ENCODE measurements at regions of chr10 and their contacts with region 1.

Region 1: GRCh38 chr10:61943674-61944410 is 42.3 kb downstream of the ARID5B start:
- DNase-seq: peak; percentile 99
- ATAC-seq: peak; percentile 14
- H3K4me3 ChIP-seq: peak overlapping the region; percentile 31
- H3K27ac ChIP-seq: peak overlapping the region; percentile 72
- H3K4me1 ChIP-seq: peaks cover 65% of the 10 kb centered on the region
- H3K27me3 ChIP-seq: no peaks in the 10 kb centered on the region
- CTCF ChIP-seq: peak; percentile 73

Region 2: GRCh38 chr10:60816628-60817397 is 1127.0 kb before region 1 on chr10:
- CTCF ChIA-PET with region 1: interaction called, 16 read pairs
- POLR2A ChIA-PET with region 1: no interaction called
- intact Hi-C with region 1: no loop called
- DNase-seq: peak; percentile 97
- ATAC-seq: peak; percentile 93
- H3K4me3 ChIP-seq: no peak overlapping the region
- H3K27ac ChIP-seq: no peak overlapping the region
- H3K4me1 ChIP-seq: peaks cover 6% of the 10 kb centered on the region; the same call in 1 of the 2 replicates
- H3K27me3 ChIP-seq: no peaks in the 10 kb centered on the region
- CTCF ChIP-seq: peak; percentile 100

Region 3: DNA sequence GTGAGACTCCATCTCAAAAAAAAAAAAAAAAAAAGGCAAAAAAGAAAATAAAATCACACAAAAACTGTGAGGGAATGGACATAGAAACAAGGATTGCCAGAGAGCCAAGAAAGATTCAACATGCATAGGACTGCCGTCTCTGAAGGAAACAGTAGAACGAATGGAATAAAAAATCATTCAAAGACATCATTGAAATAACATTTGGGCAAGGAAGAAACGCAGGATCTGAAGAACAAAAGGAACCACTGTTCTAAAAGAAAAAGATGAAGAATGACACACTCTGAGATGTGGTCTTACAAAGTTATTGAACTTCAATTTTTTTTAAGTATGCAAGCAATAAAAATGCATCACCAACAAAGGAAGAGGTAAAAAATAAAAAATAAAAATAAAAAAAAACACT is 223.9 kb before region 1 on chr10:
- CTCF ChIA-PET with region 1: no interaction called
- POLR2A ChIA-PET with region 1: no interaction called
- intact Hi-C with region 1: no loop called
- DNase-seq: no peak
- ATAC-seq: no peak
- H3K4me3 ChIP-seq: no peak overlapping the region
- H3K27ac ChIP-seq: no peak overlapping the region
- H3K4me1 ChIP-seq: no peaks in the 10 kb centered on the region
- H3K27me3 ChIP-seq: no peaks in the 10 kb centered on the region
- CTCF ChIP-seq: no peak

Region 4: DNA sequence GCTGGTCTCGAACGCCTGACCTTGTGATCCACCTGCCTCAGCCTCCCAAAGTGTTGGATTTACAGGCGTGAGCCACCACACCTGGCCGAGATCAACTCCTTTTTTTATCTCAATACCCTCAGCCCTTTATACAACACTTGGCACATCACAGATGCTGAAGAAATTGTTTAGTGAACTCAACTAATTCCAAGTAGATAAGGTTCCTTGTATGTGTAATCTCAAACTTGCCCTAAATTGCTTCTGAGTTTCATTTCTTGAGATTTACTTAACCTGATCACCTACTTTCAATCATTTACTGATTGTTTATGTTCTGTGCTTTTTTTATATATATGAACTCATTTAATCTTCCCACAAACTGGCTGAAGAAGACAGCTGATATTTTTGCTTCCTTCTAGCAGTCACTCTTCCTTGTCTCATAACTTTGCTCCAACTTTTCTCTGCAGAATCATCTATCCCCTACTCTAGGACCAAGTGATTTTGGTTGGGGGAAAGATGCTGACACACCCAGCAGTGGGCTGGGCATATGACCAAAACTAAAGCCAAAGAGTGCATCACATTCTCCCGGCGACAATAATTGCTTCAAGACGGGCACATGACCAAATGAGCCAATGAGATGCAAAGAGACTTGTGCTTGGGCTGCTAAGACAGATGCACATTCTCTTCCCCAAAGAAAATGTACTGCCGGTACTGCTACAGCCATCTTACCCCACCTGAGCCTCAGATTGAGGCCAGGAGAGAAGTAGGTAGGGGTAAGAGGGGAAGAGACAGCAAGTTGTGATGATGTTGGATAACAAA is 82.7 kb before region 1 on chr10:
- CTCF ChIA-PET with region 1: no interaction called
- POLR2A ChIA-PET with region 1: no interaction called
- intact Hi-C with region 1: no loop called
- DNase-seq: no peak
- ATAC-seq: no peak
- H3K4me3 ChIP-seq: no peak overlapping the region
- H3K27ac ChIP-seq: no peak overlapping the region
- H3K4me1 ChIP-seq: 0 out of 2 replicates have a peak, but pooled peaks cover 6% of the 10 kb centered on the region
- H3K27me3 ChIP-seq: no peaks in the 10 kb centered on the region
- CTCF ChIP-seq: no peak

Region 5: GRCh38 chr10:61918140-61918539 is 25.7 kb before region 1 on chr10:
- CTCF ChIA-PET with region 1: no interaction called
- POLR2A ChIA-PET with region 1: interaction called, 13 read pairs
- intact Hi-C with region 1: no loop called
- DNase-seq: no peak
- ATAC-seq: peak; percentile 39
- H3K4me3 ChIP-seq: no peak overlapping the region
- H3K27ac ChIP-seq: no peak overlapping the region
- H3K4me1 ChIP-seq: peaks cover 3% of the 10 kb centered on the region
- H3K27me3 ChIP-seq: no peaks in the 10 kb centered on the region
- CTCF ChIP-seq: no peak

Region 6: GRCh38 chr10:61974601-61975390 is 31.0 kb after region 1 on chr10:
- CTCF ChIA-PET with region 1: no interaction called
- POLR2A ChIA-PET with region 1: interaction called, 5 read pairs
- intact Hi-C with region 1: loop called (anchors 2 kb)
- DNase-seq: peak; percentile 68
- ATAC-seq: peak; percentile 27
- H3K4me3 ChIP-seq: no peak overlapping the region
- H3K27ac ChIP-seq: 0 out of 2 replicates have a peak overlapping the region, but pooled peaks have one; percentile 1
- H3K4me1 ChIP-seq: peaks cover 26% of the 10 kb centered on the region
- H3K27me3 ChIP-seq: no peaks in the 10 kb centered on the region
- CTCF ChIP-seq: no peak

Region 7: GRCh38 chr10:62019685-62020315 is 76.0 kb after region 1 on chr10:
- CTCF ChIA-PET with region 1: no interaction called
- POLR2A ChIA-PET with region 1: interaction called, 12 read pairs
- intact Hi-C with region 1: no loop called
- DNase-seq: no peak
- ATAC-seq: no peak
- H3K4me3 ChIP-seq: no peak overlapping the region
- H3K27ac ChIP-seq: no peak overlapping the region
- H3K4me1 ChIP-seq: peaks cover 26% of the 10 kb centered on the region
- H3K27me3 ChIP-seq: no peaks in the 10 kb centered on the region
- CTCF ChIP-seq: no peak

Region 8: DNA sequence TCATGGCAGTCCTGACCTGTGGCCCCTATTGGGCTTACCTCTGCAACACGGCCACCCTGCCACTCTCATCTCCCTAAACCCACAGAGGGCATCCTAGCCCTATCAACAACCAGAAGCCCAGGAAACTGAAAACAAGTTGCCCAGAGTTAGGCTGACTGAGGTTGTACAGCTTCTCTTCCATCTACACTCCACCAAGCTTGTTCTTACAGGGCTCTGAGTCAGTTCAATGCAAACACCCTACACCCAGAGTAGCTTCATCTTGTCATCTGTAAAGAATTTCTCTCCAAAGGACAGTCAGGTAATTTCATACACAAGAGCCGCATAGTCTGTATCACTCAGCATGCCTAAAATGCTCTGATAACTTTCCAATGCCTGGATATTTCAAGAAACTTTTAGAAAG is 133.0 kb after region 1 on chr10:
- CTCF ChIA-PET with region 1: no interaction called
- POLR2A ChIA-PET with region 1: interaction called, 10 read pairs
- intact Hi-C with region 1: no loop called
- DNase-seq: peak; percentile 100
- ATAC-seq: peak; percentile 99
- H3K4me3 ChIP-seq: peak overlapping the region; percentile 31
- H3K27ac ChIP-seq: peak overlapping the region; percentile 61
- H3K4me1 ChIP-seq: peaks cover 45% of the 10 kb centered on the region
- H3K27me3 ChIP-seq: no peaks in the 10 kb centered on the region
- CTCF ChIP-seq: peak; percentile 95